PC-9 (cell line): ENCODE measurements at regions of chr6 and their contacts with region 1.

Region 1: DNA sequence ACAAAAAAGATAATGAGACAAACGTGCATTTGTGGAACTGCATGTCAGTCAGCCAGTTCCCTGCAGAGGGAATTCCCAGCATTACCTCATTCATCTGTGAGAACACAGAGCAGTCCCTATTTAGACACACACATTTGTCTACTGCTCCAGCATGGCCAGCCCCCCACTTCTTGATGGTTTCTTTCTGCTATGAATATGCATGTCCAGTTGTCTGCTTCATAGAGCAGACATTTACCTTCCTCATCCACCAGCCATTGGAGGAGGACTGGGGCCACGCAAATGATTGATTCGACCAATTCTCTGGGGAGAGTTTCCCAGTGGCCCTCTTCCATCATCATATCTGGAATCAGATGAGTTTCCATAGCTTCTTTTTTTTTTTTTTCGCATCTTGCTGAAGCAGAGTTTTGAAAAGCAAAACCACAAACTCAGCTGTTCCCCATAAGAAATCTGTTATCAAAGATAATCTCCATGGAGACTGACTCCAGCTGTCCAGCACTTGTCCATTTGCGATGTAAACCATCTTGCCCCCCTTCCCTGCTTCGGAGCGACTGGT is 11.8 kb downstream of the ENPP1 start:
- DNase-seq: no peak
- H3K4me3 ChIP-seq: no peak overlapping the region
- H3K27ac ChIP-seq: no peak overlapping the region
- H3K4me1 ChIP-seq: no peaks in the 10 kb centered on the region
- H3K27me3 ChIP-seq: no peaks in the 10 kb centered on the region
- CTCF ChIP-seq: no peak

Region 2: DNA sequence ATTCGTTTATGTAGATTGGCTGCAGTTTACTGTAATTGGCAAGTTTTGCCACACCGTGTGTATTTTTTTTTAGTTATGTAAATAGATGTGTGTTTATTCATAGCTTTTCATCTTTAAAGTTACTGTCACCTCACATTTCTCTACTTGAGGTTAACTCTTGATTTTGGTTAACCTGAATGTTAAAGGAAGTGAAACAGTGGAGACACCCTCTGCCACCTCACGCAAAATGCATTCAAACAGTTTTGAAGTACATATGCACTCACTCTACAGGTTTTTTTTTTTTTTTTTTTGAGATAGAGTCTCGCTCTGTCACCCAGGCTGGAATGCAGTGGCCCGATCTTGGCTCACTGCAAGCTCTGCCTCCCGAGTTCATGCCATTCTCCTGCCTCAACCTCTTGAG is 136.2 kb before region 1 on chr6:
- CTCF ChIA-PET with region 1: no interaction called
- POLR2A ChIA-PET with region 1: no interaction called
- intact Hi-C with region 1: no loop called
- DNase-seq: peak; percentile 9 to 45
- H3K4me3 ChIP-seq: no peak overlapping the region
- H3K27ac ChIP-seq: no peak overlapping the region
- H3K4me1 ChIP-seq: no peaks in the 10 kb centered on the region
- H3K27me3 ChIP-seq: no peaks in the 10 kb centered on the region
- CTCF ChIP-seq: no peak

Region 3: GRCh38 chr6:131900231-131900630 is 80.6 kb after region 1 on chr6:
- CTCF ChIA-PET with region 1: no interaction called
- POLR2A ChIA-PET with region 1: no interaction called
- intact Hi-C with region 1: no loop called
- DNase-seq: no peak
- H3K4me3 ChIP-seq: no peak overlapping the region
- H3K27ac ChIP-seq: no peak overlapping the region
- H3K4me1 ChIP-seq: peaks cover 6% of the 10 kb centered on the region
- H3K27me3 ChIP-seq: no peaks in the 10 kb centered on the region
- CTCF ChIP-seq: no peak

Region 4: DNA sequence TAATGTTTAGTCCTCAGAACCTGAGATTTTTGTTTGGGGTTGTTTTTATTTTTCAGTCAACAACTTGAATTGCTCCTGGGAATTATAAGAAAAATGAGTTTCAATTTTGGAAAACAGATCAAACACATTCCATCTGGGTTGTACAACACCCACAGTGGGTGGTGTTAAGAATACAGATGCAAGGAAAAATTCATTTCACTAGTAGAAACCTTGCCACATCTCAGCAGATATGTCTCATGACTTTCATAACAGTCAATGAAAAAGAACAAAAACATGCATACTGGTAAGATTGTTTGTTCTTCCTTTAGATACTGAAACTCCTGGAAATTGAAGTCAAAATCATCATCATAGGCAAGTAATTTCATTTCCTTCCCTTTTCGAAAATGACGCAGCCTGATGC is 502.8 kb after region 1 on chr6:
- CTCF ChIA-PET with region 1: no interaction called
- POLR2A ChIA-PET with region 1: interaction called, 13 read pairs
- intact Hi-C with region 1: no loop called
- DNase-seq: no peak
- H3K4me3 ChIP-seq: no peak overlapping the region
- H3K27ac ChIP-seq: no peak overlapping the region
- H3K4me1 ChIP-seq: no peaks in the 10 kb centered on the region
- H3K27me3 ChIP-seq: no peaks in the 10 kb centered on the region
- CTCF ChIP-seq: no peak